ENCODE measurements at regions of chr20 and their contacts with region 1.

Region 1: GRCh38 chr20:44738813-44739477 is 6.7 kb upstream of the KCNK15 start:
- DNase-seq: peak; percentile 82
- CTCF ChIP-seq: no peak

Region 2: DNA sequence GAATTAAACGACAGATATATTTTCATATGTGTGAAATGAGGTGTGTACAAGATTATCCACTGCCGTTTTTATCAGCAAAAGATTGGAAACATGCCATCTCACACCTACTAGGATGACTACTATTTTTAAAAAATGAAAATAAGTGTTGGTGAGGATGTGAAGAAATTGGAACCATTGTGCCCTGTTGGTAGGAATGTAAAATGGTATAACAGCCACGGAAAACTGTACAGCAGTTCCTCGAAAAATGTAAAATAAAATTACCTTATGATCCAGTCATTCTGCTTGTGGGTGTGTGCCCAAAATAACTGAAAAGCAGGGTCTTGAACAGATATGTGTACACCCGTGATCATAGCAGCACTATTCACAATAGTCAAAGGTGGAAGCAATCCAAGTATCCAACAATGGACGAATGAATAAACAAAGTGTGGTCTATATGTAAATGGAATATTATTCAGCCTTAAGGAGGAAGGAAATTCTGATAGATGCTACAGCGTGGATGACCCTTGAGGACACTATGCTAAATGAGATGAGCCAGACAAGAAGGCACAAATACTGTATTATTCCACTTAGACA is 50.8 kb before region 1 on chr20:
- in situ Hi-C with region 1: loop called (anchors 5 kb)
- DNase-seq: no peak
- CTCF ChIP-seq: no peak

Region 3: DNA sequence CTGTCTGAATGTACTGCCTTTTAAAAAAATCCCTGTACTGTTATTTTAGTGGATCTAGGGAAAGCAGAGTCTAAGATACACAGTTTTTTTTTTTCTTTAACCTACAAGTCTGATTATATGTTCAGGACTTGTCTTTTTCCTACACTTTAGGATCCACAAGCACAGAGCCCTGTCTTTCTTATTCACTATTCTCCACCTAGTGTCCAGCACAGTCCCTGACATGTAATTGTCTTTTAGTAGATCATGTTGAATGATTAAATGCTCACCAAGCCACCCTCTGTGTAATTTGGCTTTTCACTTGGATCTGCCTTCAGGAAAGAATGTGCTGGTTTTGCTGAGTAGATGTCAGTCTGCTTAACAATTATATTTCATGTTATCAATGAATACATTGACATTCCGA is 110.8 kb after region 1 on chr20:
- in situ Hi-C with region 1: no loop called
- DNase-seq: no peak
- CTCF ChIP-seq: no peak

Region 4: DNA sequence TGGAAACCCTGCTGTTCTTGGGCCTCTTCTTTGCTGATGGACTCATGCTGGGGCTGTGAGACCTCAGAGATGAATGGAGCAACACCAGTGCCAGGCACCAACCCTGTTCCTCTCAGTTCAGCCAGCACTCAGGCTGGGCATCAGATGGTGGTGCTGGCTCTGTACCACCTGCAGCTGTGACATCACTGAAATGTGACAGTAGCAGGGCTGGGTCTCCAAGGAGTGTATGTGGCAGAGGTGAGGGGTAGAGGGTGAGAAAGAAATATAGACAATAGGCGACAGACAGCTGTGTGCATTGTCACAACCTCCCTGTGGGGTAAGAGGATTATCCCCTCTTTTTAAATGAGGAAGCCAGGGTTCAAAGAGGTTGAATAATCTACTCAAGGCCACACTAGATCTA is 639.2 kb after region 1 on chr20 and contains the start of gene TP53TG5:
- in situ Hi-C with region 1: no loop called
- DNase-seq: no peak
- CTCF ChIP-seq: no peak

Measured in GM13977 (cell line).